ENCODE measurements at regions of chr1 and their contacts with region 1.

Region 1: GRCh38 chr1:179293340-179294327 is at the start of gene SOAT1:
- DNase-seq: peak; percentile 91
- H3K4me3 ChIP-seq: peak within 1 kb of the TSS; percentile 82 to 94 (median 92)
- H3K27ac ChIP-seq: peak within 1 kb of the TSS; percentile 46
- H3K4me1 ChIP-seq: peaks cover 14% of the 10 kb centered on the region
- H3K27me3 ChIP-seq: no peaks in the 10 kb centered on the region
- CTCF ChIP-seq: peak; percentile 4 to 43
- POLR2A ChIP-seq: no peak
- total RNA-seq, gene SOAT1: 34.2 and 38.2 TPM in 2 replicates

Region 2: DNA sequence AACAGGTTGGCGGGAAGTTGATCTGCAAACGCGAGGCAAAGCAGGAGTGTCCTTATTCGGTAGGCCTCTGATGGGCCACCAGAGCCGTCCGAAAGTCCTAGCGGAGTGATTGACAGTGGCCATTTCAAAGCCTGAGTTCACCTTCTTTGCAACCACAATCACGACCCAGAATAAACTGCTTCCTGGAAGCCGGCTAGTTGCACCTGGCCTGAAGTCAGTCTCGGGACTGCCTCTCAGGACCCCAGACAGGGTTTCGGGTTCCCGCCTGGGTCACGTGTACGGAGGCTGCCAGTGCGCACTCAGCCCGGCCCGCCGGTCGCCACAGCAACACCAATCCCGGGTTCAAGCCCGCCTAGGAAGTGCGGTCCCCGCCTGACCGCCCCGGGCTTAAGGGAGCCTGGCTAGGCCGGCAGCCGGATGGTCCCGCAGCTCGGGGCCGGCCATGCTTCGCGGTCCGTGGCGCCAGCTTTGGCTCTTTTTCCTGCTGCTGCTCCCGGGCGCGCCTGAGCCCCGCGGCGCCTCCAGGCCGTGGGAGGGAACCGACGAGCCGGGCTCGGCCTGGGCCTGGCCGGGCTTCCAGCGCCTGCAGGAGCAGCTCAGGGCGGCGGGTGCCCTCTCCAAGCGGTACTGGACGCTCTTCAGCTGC is 211.8 kb before region 1 on chr1 and contains the start of gene TOR3A:
- CTCF ChIA-PET with region 1: interaction called, 8 read pairs
- POLR2A ChIA-PET with region 1: interaction called, 3 read pairs
- dilution Hi-C with region 1: no loop called
- intact Hi-C with region 1: loop called (anchors 1 kb)
- DNase-seq: peak; percentile 89
- H3K4me3 ChIP-seq: peak within 1 kb of the TSS; percentile 68 to 80 (median 77)
- H3K27ac ChIP-seq: peak within 1 kb of the TSS; percentile 62
- H3K4me1 ChIP-seq: peaks cover 14% of the 10 kb centered on the region
- H3K27me3 ChIP-seq: no peaks in the 10 kb centered on the region
- CTCF ChIP-seq: no peak
- POLR2A ChIP-seq: peak; percentile 88
- total RNA-seq, gene TOR3A: 16.7 and 22.4 TPM in 2 replicates

Region 3: DNA sequence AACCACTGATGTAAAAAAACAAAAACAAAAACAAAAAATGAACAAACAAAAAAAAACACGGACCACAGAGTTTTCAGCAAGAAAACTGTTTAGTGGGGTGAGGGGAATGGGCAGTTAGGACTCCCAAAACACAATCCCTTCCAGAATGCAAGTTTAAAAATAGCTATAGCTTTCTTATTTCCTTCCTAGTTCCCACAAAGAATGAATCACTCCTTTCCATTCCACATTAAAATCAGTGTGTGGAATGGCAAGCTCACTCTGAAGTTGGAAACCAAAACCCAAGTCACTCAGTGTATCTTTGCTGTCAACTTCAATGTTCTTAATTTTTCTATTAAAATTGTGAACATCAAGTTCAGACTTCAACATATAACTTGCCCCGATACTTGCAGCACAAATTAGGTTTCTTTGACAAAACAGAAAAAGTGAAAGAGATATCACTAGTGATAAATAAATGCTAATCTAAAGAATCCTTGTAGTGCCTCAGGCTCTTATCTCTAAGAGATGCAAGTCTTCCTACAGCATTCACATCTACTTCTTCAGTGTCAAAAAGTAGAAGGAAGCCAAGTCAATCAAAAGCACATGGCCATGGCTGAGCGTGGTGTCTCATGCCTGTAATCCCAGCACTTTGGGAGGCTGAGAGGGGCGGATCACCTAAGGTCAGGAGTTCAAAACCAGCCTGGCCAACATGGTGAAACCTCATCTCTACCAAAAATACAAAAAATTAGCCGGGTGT is 166.3 kb before region 1 on chr1:
- CTCF ChIA-PET with region 1: interaction called, 5 read pairs
- POLR2A ChIA-PET with region 1: no interaction called
- dilution Hi-C with region 1: no loop called
- intact Hi-C with region 1: loop called (anchors 1 kb)
- DNase-seq: peak; percentile 77
- H3K4me3 ChIP-seq: peak overlapping the region in 1 of 3 experiments; percentile 34
- H3K27ac ChIP-seq: peak overlapping the region; percentile 53
- H3K4me1 ChIP-seq: peaks cover 57% of the 10 kb centered on the region
- H3K27me3 ChIP-seq: no peaks in the 10 kb centered on the region
- CTCF ChIP-seq: no peak
- POLR2A ChIP-seq: no peak

Region 4: GRCh38 chr1:179190861-179191260 is 102.8 kb before region 1 on chr1:
- CTCF ChIA-PET with region 1: no interaction called
- POLR2A ChIA-PET with region 1: no interaction called
- dilution Hi-C with region 1: no loop called
- intact Hi-C with region 1: loop called (anchors 1 kb)
- DNase-seq: peak; percentile 67
- H3K4me3 ChIP-seq: no peak overlapping the region
- H3K27ac ChIP-seq: peak overlapping the region; percentile 10
- H3K4me1 ChIP-seq: peaks cover 8% of the 10 kb centered on the region
- H3K27me3 ChIP-seq: no peaks in the 10 kb centered on the region
- CTCF ChIP-seq: no peak
- POLR2A ChIP-seq: no peak

Region 5: GRCh38 chr1:179217943-179218507 is 75.6 kb before region 1 on chr1:
- CTCF ChIA-PET with region 1: no interaction called
- POLR2A ChIA-PET with region 1: no interaction called
- dilution Hi-C with region 1: no loop called
- intact Hi-C with region 1: no loop called
- DNase-seq: peak; percentile 64
- H3K4me3 ChIP-seq: no peak overlapping the region
- H3K27ac ChIP-seq: peak overlapping the region; percentile 48
- H3K4me1 ChIP-seq: peaks cover 6% of the 10 kb centered on the region
- H3K27me3 ChIP-seq: no peaks in the 10 kb centered on the region
- CTCF ChIP-seq: no peak
- POLR2A ChIP-seq: no peak

Region 6: GRCh38 chr1:179251675-179252074 is 42.0 kb before region 1 on chr1:
- CTCF ChIA-PET with region 1: interaction called, 13 read pairs
- POLR2A ChIA-PET with region 1: no interaction called
- dilution Hi-C with region 1: no loop called
- intact Hi-C with region 1: no loop called
- DNase-seq: peak; percentile 48
- H3K4me3 ChIP-seq: no peak overlapping the region
- H3K27ac ChIP-seq: no peak overlapping the region
- H3K4me1 ChIP-seq: peaks cover 8% of the 10 kb centered on the region
- H3K27me3 ChIP-seq: no peaks in the 10 kb centered on the region
- CTCF ChIP-seq: peak in 1 of 2 donors; percentile 34
- POLR2A ChIP-seq: no peak

Region 7: DNA sequence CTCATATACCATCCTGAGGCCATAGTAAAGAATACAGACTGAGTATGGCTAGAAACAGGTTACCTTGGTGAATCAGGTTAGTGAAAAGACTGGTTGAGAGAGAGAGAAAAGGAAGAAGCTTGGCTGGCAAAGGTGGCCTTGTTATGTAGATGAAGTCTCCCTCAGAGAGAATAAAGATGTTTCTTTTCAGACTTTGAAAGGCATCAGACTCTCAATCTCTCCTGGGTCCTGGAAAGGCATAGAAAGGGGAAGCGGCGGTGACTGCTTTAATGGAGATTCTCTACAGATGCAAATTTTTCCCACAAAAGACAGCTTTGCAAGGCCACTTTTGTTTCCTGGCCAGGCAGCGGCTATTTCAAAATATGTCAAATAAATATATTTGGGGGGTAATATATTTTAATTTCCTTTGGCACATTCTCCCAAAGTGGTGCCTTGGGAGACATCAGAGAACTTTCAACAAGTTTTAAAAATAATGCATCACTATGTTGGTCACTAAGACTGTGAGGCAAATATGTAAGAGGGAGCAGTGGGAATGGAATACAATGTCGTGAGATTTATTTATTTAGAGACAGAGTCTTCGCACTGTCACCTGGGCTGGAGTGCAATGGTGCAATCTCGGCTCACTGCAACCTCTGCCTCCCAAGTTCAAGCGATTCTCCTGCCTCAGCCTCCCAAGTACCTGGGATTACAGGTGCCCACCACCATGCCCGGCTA is 236.0 kb after region 1 on chr1:
- CTCF ChIA-PET with region 1: no interaction called
- POLR2A ChIA-PET with region 1: no interaction called
- dilution Hi-C with region 1: no loop called
- intact Hi-C with region 1: no loop called
- DNase-seq: no peak
- H3K4me3 ChIP-seq: no peak overlapping the region
- H3K27ac ChIP-seq: no peak overlapping the region
- H3K4me1 ChIP-seq: no peaks in the 10 kb centered on the region
- H3K27me3 ChIP-seq: no peaks in the 10 kb centered on the region
- CTCF ChIP-seq: no peak
- POLR2A ChIP-seq: no peak

Measured in endothelial cell of umbilical vein (primary cell).